ENCODE measurements at regions of chr15 and their contacts with region 1.

Region 1: DNA sequence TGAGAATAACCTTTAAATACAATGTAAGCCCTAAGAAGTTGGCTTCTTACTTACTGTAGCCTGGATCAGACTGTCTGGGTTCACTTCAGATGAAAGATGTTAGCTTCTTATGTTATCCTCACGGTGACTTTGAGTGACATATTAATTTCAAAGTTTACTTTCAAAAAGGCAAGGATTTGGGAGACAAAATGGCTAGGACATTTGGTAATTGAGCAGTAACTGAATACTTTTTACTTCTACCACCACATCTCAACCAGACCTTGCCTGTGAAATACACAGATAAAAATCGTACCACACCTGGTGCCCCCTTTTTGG is 36.0 kb upstream of the BNIP2 start:
- DNase-seq: no peak
- ATAC-seq: no peak
- H3K4me3 ChIP-seq: no peak overlapping the region
- H3K27ac ChIP-seq: no peak overlapping the region
- H3K4me1 ChIP-seq: no peaks in the 10 kb centered on the region
- H3K27me3 ChIP-seq: peaks cover 2 to 4% of the 10 kb centered on the region in 2 experiments; a peak in 2 of 4 replicates
- CTCF ChIP-seq: no peak
- EP300 ChIP-seq: no peak
- POLR2A ChIP-seq: no peak
- RAD21 ChIP-seq: no peak

Region 2: DNA sequence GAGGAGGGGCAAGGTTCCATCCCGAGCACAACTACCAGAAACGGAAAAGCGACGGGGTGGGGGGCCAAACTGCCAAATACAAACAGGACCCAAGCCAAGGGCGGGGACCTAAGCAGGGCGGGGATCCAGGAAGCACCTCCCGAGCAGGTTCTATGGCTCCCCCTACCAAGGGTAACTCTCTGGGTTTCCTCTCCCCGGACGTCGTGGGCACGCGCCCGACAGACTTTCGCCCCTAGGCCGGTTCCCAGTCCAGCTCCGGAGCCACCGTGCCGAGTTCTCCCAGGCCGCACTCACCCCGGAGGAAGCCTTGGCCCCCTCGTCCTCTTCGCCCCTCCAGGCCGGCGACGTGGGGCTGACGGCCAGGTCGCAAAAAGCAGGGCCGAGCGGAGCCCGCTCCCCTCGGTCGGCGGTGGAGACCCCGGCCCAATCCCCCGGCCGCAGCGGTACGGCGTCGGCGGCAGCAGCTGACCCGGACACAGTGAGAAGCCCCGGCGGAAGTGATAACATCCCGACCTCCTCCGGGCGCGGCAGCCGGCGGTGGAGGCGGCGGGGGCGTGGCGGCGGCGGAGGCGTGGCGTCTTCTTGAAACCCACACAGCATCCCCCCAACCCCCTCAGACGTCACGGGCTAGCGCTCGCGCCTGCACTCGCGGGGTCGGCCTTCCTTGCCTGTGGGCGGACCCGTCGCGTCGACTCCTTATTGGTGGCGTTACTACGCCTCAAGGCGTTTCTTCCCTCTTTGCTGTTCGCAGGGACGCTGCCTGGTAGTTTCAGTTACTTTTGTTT is 36.1 kb before region 1 on chr15 and contains the start of gene BNIP2:
- CTCF ChIA-PET with region 1: interaction called, 36 read pairs
- POLR2A ChIA-PET with region 1: no interaction called
- RAD21 ChIA-PET with region 1: interaction called, 11 read pairs
- SMC1A ChIA-PET with region 1: interaction called, 9 read pairs
- in situ Hi-C with region 1: no loop called
- intact Hi-C with region 1: no loop called
- DNase-seq: peak; percentile 92
- ATAC-seq: peak; percentile 91
- H3K4me3 ChIP-seq: peak within 1 kb of the TSS; percentile 94
- H3K27ac ChIP-seq: peak within 1 kb of the TSS; percentile 98
- H3K4me1 ChIP-seq: peaks cover 9% of the 10 kb centered on the region
- H3K27me3 ChIP-seq: no peaks in the 10 kb centered on the region
- CTCF ChIP-seq: no peak
- EP300 ChIP-seq: no peak
- POLR2A ChIP-seq: peak; percentile 90
- RAD21 ChIP-seq: no peak
- polyA plus RNA-seq, gene BNIP2: 29.9 to 58.5 TPM

Region 3: GRCh38 chr15:59711451-59712243 is 13.5 kb before region 1 on chr15:
- CTCF ChIA-PET with region 1: interaction called, 14 read pairs
- POLR2A ChIA-PET with region 1: no interaction called
- RAD21 ChIA-PET with region 1: no interaction called
- SMC1A ChIA-PET with region 1: interaction called, 4 read pairs
- in situ Hi-C with region 1: no loop called
- intact Hi-C with region 1: no loop called
- DNase-seq: no peak
- ATAC-seq: no peak
- H3K4me3 ChIP-seq: no peak overlapping the region
- H3K27ac ChIP-seq: no peak overlapping the region
- H3K4me1 ChIP-seq: no peaks in the 10 kb centered on the region
- H3K27me3 ChIP-seq: no peaks in the 10 kb centered on the region
- CTCF ChIP-seq: no peak
- EP300 ChIP-seq: no peak
- POLR2A ChIP-seq: no peak
- RAD21 ChIP-seq: no peak

Region 4: GRCh38 chr15:59764775-59765174 is 39.6 kb after region 1 on chr15:
- CTCF ChIA-PET with region 1: interaction called, 12 read pairs
- POLR2A ChIA-PET with region 1: no interaction called
- RAD21 ChIA-PET with region 1: no interaction called
- SMC1A ChIA-PET with region 1: no interaction called
- in situ Hi-C with region 1: no loop called
- intact Hi-C with region 1: no loop called
- DNase-seq: no peak
- ATAC-seq: 0 out of 3 replicates have a peak, but pooled peaks have one; percentile 32
- H3K4me3 ChIP-seq: no peak overlapping the region
- H3K27ac ChIP-seq: no peak overlapping the region
- H3K4me1 ChIP-seq: no peaks in the 10 kb centered on the region
- H3K27me3 ChIP-seq: no peaks in the 10 kb centered on the region; a peak in 1 of 4 replicates
- CTCF ChIP-seq: peak in 1 of 3 experiments; percentile 13; a peak in 2 of 6 replicates
- EP300 ChIP-seq: no peak
- POLR2A ChIP-seq: no peak
- RAD21 ChIP-seq: no peak

Region 5: GRCh38 chr15:59792359-59792758 is 67.2 kb after region 1 on chr15:
- CTCF ChIA-PET with region 1: no interaction called
- POLR2A ChIA-PET with region 1: no interaction called
- RAD21 ChIA-PET with region 1: no interaction called
- SMC1A ChIA-PET with region 1: no interaction called
- in situ Hi-C with region 1: no loop called
- intact Hi-C with region 1: no loop called
- DNase-seq: no peak
- ATAC-seq: no peak
- H3K4me3 ChIP-seq: no peak overlapping the region
- H3K27ac ChIP-seq: no peak overlapping the region
- H3K4me1 ChIP-seq: no peaks in the 10 kb centered on the region
- H3K27me3 ChIP-seq: peaks cover 0 to 3% of the 10 kb centered on the region in 2 experiments; a peak in 2 of 4 replicates
- CTCF ChIP-seq: no peak
- EP300 ChIP-seq: no peak
- POLR2A ChIP-seq: no peak
- RAD21 ChIP-seq: no peak

Region 6: GRCh38 chr15:59917504-59918157 is 192.5 kb after region 1 on chr15:
- CTCF ChIA-PET with region 1: interaction called, 3 read pairs
- POLR2A ChIA-PET with region 1: no interaction called
- RAD21 ChIA-PET with region 1: no interaction called
- SMC1A ChIA-PET with region 1: interaction called, 3 read pairs
- in situ Hi-C with region 1: no loop called
- intact Hi-C with region 1: loop called (anchors 5 kb)
- DNase-seq: peak; percentile 8
- ATAC-seq: peak; percentile 94
- H3K4me3 ChIP-seq: no peak overlapping the region
- H3K27ac ChIP-seq: no peak overlapping the region
- H3K4me1 ChIP-seq: peaks cover 10% of the 10 kb centered on the region
- H3K27me3 ChIP-seq: no peaks in the 10 kb centered on the region; a peak in 1 of 4 replicates
- CTCF ChIP-seq: peak; percentile 71 to 76 (median 73)
- EP300 ChIP-seq: no peak
- POLR2A ChIP-seq: no peak
- RAD21 ChIP-seq: peak; percentile 77

Region 7: DNA sequence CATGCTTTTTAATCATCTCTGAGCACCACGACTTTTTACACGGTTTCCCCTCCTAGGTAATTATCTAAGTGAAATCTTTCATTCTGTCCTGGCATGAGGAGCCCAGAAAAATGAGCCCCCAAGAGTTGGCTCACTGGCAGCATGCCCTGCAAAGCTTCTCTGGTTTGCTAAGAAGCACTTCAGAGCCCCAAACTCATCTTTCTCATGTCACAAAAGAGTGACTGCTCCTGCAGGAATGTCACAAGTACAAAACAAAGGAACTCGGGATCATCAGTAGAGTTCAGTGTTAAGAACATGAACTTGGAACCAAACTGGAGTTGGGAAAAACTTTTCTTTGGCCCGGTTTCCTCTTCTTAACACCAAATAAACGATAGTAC is 402.9 kb after region 1 on chr15:
- CTCF ChIA-PET with region 1: interaction called, 3 read pairs
- POLR2A ChIA-PET with region 1: no interaction called
- RAD21 ChIA-PET with region 1: no interaction called
- SMC1A ChIA-PET with region 1: no interaction called
- in situ Hi-C with region 1: no loop called
- intact Hi-C with region 1: loop called (anchors 5 kb)
- DNase-seq: no peak
- ATAC-seq: no peak
- H3K4me3 ChIP-seq: peak overlapping the region; percentile 66
- H3K27ac ChIP-seq: peak overlapping the region; percentile 37; the same call in 1 of the 2 replicates
- H3K4me1 ChIP-seq: peaks cover 23% of the 10 kb centered on the region
- H3K27me3 ChIP-seq: no peaks in the 10 kb centered on the region
- CTCF ChIP-seq: no peak
- EP300 ChIP-seq: no peak
- POLR2A ChIP-seq: no peak
- RAD21 ChIP-seq: no peak

Region 8: GRCh38 chr15:60179786-60180391 is 454.8 kb after region 1 on chr15:
- CTCF ChIA-PET with region 1: interaction called, 12 read pairs
- POLR2A ChIA-PET with region 1: no interaction called
- RAD21 ChIA-PET with region 1: interaction called, 6 read pairs
- SMC1A ChIA-PET with region 1: interaction called, 10 read pairs
- in situ Hi-C with region 1: no loop called
- intact Hi-C with region 1: loop called (anchors 5 kb)
- DNase-seq: peak; percentile 3
- ATAC-seq: peak; percentile 68
- H3K4me3 ChIP-seq: no peak overlapping the region
- H3K27ac ChIP-seq: no peak overlapping the region
- H3K4me1 ChIP-seq: no peaks in the 10 kb centered on the region
- H3K27me3 ChIP-seq: peaks cover 0 to 4% of the 10 kb centered on the region in 2 experiments; a peak in 1 of 4 replicates
- CTCF ChIP-seq: peak; percentile 73 to 80 (median 77)
- EP300 ChIP-seq: no peak
- POLR2A ChIP-seq: no peak
- RAD21 ChIP-seq: peak; percentile 80

Measured in GM12878 (cell line).